ENCODE measurements at regions of chr18 and their contacts with region 1.

Region 1: DNA sequence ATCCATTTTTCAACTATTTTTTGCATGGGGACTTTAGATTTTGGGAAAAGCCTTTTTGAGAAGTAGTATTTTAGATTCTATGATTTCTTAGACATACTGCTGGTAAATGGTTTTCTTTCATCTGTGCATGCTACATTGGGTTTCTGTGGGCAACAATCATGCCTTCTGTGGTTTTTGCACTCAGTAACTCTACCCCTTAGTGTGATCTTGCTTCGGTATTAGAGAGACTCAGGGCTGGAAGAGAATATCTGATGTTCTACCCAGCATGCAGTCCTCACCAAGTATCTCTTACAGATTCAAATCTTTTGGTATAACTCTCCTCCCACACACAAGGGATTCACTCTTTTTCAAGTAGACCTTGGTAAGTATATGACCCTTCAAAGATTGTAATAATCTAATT is 183.0 kb downstream of the PMAIP1 start:
- DNase-seq: no peak
- H3K4me3 ChIP-seq: no peak overlapping the region
- H3K27ac ChIP-seq: no peak overlapping the region
- H3K4me1 ChIP-seq: no peaks in the 10 kb centered on the region
- H3K27me3 ChIP-seq: no peaks in the 10 kb centered on the region
- CTCF ChIP-seq: no peak

Region 2: GRCh38 chr18:60069145-60069544 is 13.6 kb before region 1 on chr18:
- intact Hi-C with region 1: loop called (anchors 1 kb)
- DNase-seq: no peak
- H3K4me3 ChIP-seq: no peak overlapping the region
- H3K27ac ChIP-seq: no peak overlapping the region
- H3K4me1 ChIP-seq: no peaks in the 10 kb centered on the region
- H3K27me3 ChIP-seq: no peaks in the 10 kb centered on the region
- CTCF ChIP-seq: no peak

Region 3: DNA sequence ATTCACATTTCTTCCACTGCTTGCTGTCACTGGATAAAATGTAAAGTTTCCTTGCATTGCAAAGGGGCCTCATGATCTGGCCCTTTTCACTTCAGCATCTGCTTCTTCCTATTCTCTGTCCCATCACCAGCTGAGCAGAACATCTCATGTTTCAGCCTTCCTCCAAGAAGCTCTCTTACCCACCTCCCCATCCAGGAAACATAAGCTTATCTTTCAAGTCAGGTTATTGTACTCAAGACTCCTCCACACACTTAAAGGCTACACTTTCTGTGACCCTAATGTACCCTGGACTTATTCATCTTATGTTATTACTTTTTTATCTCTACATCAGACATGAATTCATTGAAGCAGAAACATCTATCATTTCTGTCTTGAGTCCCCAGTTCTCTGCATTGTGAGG is 47.5 kb after region 1 on chr18:
- intact Hi-C with region 1: no loop called
- DNase-seq: no peak
- H3K4me3 ChIP-seq: no peak overlapping the region
- H3K27ac ChIP-seq: no peak overlapping the region
- H3K4me1 ChIP-seq: no peaks in the 10 kb centered on the region
- H3K27me3 ChIP-seq: no peaks in the 10 kb centered on the region
- CTCF ChIP-seq: no peak

Measured in ascending aorta (tissue), 2 donors.